AG04449 (cell line): ENCODE measurements at regions of chr9 and their contacts with region 1.

Region 1: DNA sequence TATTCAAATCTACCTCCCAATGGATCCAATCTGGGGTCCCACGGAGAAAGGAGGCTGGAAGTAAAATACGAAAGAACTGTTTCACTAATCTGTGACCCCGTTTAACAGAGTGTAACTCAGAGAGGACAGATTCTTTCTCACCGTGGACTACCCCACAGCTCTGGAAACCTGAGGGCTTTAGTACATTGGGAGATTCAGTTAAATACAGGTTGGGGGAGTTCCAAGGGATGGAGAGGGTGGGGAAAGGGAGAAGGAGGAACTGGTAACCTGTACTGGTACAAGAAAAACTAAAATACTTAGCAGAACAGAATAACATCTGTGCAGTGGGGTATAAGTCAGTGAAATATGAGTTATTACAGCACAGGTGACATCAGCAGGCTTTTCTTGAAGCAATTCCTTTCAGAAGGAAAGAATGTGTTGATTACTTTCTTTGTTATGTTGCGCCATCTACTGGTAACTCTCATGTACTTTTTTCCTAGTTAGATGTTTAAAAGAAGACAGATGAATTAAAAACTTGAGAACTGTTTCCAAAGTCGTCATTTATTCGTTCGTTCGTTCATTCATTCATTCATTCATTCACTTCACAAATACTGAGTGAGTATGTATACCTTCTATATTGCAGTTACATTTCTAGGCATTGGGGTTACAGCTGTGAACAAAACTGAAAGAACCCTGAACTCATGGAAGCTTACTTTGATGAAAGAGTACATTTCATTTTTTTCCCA is 30.0 kb upstream of the STOM start:
- DNase-seq: peak; percentile 37
- H3K4me3 ChIP-seq: no peak overlapping the region
- CTCF ChIP-seq: peak; percentile 28

Region 2: DNA sequence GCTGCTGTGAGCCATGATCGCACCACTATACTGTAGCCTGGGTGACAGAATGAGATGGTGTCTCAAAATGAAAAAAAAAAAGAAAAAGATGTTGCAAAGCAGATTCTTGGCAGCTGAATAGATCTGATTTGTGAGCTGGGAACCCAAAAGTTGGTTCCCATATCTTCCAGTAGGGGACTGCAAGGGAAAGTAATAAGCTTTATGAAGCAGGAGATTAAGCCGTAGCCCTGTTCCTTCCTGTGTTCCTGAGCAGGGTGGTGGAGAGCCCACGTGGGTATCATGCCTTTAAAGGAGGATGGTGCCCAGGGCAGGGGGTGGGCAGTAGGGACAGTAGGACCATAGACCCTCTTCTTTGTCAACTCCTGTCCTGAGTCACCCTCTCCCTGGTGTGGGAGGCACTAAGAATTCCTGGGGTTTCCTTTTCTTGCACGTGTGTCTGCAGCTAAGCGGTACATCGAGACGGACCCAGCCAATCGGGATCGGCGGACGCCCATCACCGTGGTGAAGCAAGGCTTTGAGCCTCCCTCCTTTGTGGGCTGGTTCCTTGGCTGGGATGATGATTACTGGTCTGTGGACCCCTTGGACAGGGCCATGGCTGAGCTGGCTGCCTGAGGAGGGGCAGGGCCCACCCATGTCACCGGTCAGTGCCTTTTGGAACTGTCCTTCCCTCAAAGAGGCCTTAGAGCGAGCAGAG is 67.9 kb before region 1 on chr9:
- CTCF ChIA-PET with region 1: interaction called, 19 read pairs
- POLR2A ChIA-PET with region 1: no interaction called
- DNase-seq: no peak
- H3K4me3 ChIP-seq: no peak overlapping the region
- CTCF ChIP-seq: peak; percentile 23